Natural killer cell (primary cell): ENCODE measurements at regions of chr2 and their contacts with region 1.

Region 1: GRCh38 chr2:73828818-73829570 is at the start of gene STAMBP:
- DNase-seq: peak; percentile 81 to 97
- ATAC-seq: peak; percentile 78 to 91 (median 91)
- H3K4me3 ChIP-seq: peak within 1 kb of the TSS; percentile 70
- H3K4me3 Mint-ChIP-seq: peak within 1 kb of the TSS; percentile 97
- H3K27ac ChIP-seq: peak within 1 kb of the TSS; percentile 93
- H3K27ac Mint-ChIP-seq: peak within 1 kb of the TSS; percentile 97 to 98
- H3K4me1 ChIP-seq: peaks cover 20% of the 10 kb centered on the region
- H3K4me1 Mint-ChIP-seq: peaks cover 43% of the 10 kb centered on the region in 2 donors
- H3K27me3 ChIP-seq: no peaks in the 10 kb centered on the region
- H3K27me3 Mint-ChIP-seq: no peaks in the 10 kb centered on the region
- CTCF ChIP-seq: no peak
- total RNA-seq, gene STAMBP: 23.8 to 27.3 (median 25.3) TPM

Region 2: DNA sequence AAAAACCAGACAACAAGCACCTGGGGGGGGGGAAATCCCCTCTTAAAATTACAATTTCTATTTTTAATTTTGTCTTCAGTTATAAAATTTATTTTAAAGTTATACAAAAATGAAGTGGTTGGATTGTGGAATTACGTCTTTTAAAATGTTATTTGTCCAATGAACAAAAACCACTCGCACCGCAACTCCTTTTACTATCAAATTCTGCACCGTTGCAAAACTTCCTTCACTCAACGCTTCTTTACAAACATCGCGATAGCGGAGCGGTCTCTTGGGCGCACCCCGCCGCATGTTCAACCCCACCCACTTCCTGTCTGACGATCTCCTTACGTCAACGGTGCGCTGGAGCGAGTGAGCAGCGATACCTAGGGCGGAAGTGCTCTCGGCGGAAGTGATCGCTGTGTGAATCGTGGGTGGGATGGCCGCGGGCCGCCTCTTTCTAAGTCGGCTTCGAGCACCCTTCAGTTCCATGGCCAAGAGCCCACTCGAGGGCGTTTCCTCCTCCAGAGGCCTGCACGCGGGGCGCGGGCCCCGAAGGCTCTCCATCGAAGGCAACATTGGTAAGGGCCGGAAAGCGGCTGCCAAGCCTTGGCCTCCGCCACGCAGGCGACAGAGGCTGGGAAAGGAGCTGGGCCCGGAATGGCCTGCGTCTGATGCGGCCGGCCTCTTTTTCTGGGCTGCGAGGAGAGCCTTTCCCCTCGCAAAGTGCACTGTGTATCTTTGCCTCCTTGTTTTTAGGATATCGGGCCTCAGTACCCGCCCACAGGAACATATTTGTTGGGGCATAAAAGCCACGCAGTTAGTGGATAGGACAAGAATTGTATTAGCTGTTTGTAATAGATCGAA is 97.7 kb after region 1 on chr2 and contains the start of gene DGUOK:
- intact Hi-C with region 1: loop called (anchors 1 kb)
- DNase-seq: peak; percentile 95 to 100
- ATAC-seq: peak; percentile 97 to 100 (median 98)
- H3K4me3 ChIP-seq: peak within 1 kb of the TSS; percentile 88
- H3K4me3 Mint-ChIP-seq: peak within 1 kb of the TSS; percentile 80
- H3K27ac ChIP-seq: peak within 1 kb of the TSS; percentile 99
- H3K27ac Mint-ChIP-seq: peak within 1 kb of the TSS; percentile 95 to 96
- H3K4me1 ChIP-seq: peaks cover 20% of the 10 kb centered on the region
- H3K4me1 Mint-ChIP-seq: peaks cover 34 to 43% of the 10 kb centered on the region in 2 donors
- H3K27me3 ChIP-seq: no peaks in the 10 kb centered on the region
- H3K27me3 Mint-ChIP-seq: no peaks in the 10 kb centered on the region
- CTCF ChIP-seq: no peak
- total RNA-seq, gene DGUOK: 47.6 to 56.8 (median 54.8) TPM

Region 3: DNA sequence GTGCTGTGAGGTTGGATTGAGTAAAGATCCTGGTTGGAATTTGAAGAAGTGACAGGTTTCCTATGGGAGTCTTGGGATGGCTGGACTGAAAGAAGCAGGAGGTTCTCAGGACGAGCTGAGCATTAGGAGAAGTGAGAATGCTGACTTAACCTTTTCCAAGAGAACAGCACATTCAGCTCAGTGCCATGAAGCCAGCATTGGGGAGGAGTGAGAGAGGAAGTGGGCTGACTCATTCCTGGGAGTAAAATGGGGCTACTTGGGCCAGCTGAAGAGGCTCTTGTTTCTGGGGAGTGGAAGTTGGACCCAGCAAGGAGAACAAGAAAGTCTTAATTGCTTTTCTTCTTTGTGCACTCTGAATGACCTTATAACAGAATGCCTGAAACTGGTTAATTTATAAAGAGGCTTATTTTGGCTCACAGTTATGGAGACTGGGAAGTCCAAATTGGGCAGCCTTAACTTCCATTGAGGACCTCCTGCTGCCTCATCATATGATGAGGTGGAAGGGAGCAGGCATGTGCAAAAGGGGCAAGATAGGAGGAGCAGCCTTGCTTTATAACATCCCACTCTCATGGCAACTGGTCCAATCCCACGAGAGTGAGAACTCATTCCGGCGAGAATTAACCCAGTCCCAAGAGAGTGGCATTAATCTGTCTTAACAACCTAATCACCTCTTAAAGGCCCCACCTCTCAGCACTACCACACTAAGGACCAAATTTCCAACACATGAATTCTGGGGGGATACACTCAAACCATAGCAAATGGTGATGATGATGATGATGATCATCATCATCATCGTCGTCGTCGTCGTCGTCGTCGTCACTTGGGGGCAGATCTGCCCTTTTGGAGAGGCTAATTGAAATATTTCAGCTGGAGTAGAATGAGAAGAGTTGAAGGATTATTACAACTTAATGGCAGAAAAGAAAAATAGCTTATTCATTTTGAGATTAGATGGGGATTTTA is 123.8 kb after region 1 on chr2:
- intact Hi-C with region 1: no loop called
- DNase-seq: no peak
- ATAC-seq: no peak
- H3K4me3 ChIP-seq: no peak overlapping the region
- H3K4me3 Mint-ChIP-seq: no peak overlapping the region
- H3K27ac ChIP-seq: no peak overlapping the region
- H3K27ac Mint-ChIP-seq: peak overlapping the region in 1 of 2 donors; percentile 75
- H3K4me1 ChIP-seq: peaks cover 7% of the 10 kb centered on the region
- H3K4me1 Mint-ChIP-seq: peaks cover 14 to 46% of the 10 kb centered on the region in 2 donors
- H3K27me3 ChIP-seq: no peaks in the 10 kb centered on the region
- H3K27me3 Mint-ChIP-seq: no peaks in the 10 kb centered on the region
- CTCF ChIP-seq: no peak

Region 4: GRCh38 chr2:74147727-74148456 is 318.9 kb after region 1 on chr2 and contains the start of gene BOLA3:
- intact Hi-C with region 1: loop called (anchors 2 kb)
- DNase-seq: peak; percentile 82 to 86
- ATAC-seq: peak; percentile 94 to 97 (median 95)
- H3K4me3 ChIP-seq: peak within 1 kb of the TSS; percentile 52
- H3K4me3 Mint-ChIP-seq: no peak within 1 kb of the TSS
- H3K27ac ChIP-seq: peak within 1 kb of the TSS; percentile 39
- H3K27ac Mint-ChIP-seq: no peak within 1 kb of the TSS
- H3K4me1 ChIP-seq: peaks cover 22% of the 10 kb centered on the region
- H3K4me1 Mint-ChIP-seq: no peaks in the 10 kb centered on the region
- H3K27me3 ChIP-seq: no peaks in the 10 kb centered on the region
- H3K27me3 Mint-ChIP-seq: no peaks in the 10 kb centered on the region
- CTCF ChIP-seq: peak; percentile 86
- total RNA-seq, gene BOLA3: 8.1 to 13.8 (median 11.9) TPM

Region 5: GRCh38 chr2:74334931-74335333 is 505.9 kb after region 1 on chr2:
- intact Hi-C with region 1: loop called (anchors 1 kb)
- DNase-seq: peak; percentile 71 to 89
- ATAC-seq: peak; percentile 78 to 90 (median 85)
- H3K4me3 ChIP-seq: no peak overlapping the region
- H3K4me3 Mint-ChIP-seq: no peak overlapping the region
- H3K27ac ChIP-seq: no peak overlapping the region
- H3K27ac Mint-ChIP-seq: no peak overlapping the region
- H3K4me1 ChIP-seq: peaks cover 2% of the 10 kb centered on the region
- H3K4me1 Mint-ChIP-seq: no peaks in the 10 kb centered on the region
- H3K27me3 ChIP-seq: no peaks in the 10 kb centered on the region
- H3K27me3 Mint-ChIP-seq: no peaks in the 10 kb centered on the region
- CTCF ChIP-seq: peak; percentile 99